ENCODE measurements at regions of chr9 and their contacts with region 1.

Region 1: DNA sequence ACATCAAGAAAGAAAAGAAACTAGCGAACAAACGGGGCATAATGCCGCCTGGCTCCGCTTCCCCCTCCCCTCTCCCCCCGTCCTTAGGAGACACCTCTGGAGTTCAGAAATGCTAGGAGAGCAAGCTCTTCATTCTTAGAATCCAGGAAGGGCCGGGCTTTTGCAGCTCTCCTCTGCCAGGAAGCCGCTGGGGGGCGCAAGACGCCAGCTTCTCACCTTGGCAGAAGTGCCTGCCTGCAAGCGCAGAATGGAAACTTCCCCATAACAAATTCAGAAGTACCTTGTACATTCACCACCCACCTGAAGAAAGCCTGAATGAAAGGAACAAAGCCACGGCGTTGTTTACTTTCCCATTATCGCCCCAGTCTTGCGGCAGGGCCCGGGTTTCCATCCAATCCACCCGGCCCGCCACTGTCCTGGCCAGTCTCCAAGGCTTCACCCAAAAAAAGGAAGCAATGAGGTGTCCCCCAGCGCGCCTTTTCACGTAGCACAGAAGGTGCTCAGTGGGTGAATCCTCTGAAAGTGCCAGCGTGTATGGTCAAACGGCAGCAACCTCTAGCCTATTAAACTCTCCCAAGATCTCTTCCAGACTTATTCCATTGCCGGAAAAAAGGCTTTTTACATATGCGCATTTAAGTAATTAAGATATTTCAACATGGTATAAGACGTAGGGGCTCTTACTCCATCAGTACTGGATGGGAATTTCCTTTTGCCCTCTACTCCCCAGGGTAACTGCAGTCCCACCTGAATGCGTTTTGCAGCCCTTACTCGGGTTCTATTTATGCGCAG is 1.6 kb upstream of the GADD45G start:
- DNase-seq: peak; percentile 87

Region 2: GRCh38 chr9:90102292-90102901 is 499.2 kb after region 1 on chr9:
- in situ Hi-C with region 1: loop called (anchors 10 kb)
- DNase-seq: peak; percentile 61